IMR-90 (cell line): ENCODE measurements at regions of chr19 and their contacts with region 1.

Region 1: GRCh38 chr19:2503521-2504109 is 27.7 kb downstream of the GADD45B start:
- DNase-seq: peak; percentile 78
- ATAC-seq: peak; percentile 71
- H3K4me3 ChIP-seq: no peak overlapping the region
- H3K27ac ChIP-seq: peak overlapping the region; percentile 17; the same call in 1 of the 2 replicates
- H3K4me1 ChIP-seq: peaks cover 15% of the 10 kb centered on the region
- H3K27me3 ChIP-seq: no peaks in the 10 kb centered on the region
- CTCF ChIP-seq: no peak
- POLR2A ChIP-seq: peak; percentile 49; the same call in 1 of the 2 replicates
- RAD21 ChIP-seq: no peak

Region 2: GRCh38 chr19:2491130-2491801 is 12.3 kb before region 1 on chr19:
- CTCF ChIA-PET with region 1: no interaction called
- POLR2A ChIA-PET with region 1: no interaction called
- dilution Hi-C with region 1: no loop called
- in situ Hi-C with region 1: no loop called
- intact Hi-C with region 1: loop called (anchors 1 kb)
- DNase-seq: peak; percentile 84
- ATAC-seq: peak; percentile 53
- H3K4me3 ChIP-seq: no peak overlapping the region
- H3K27ac ChIP-seq: peak overlapping the region; percentile 2; the same call in 1 of the 2 replicates
- H3K4me1 ChIP-seq: peaks cover 22% of the 10 kb centered on the region
- H3K27me3 ChIP-seq: no peaks in the 10 kb centered on the region; the same call in 1 of the 2 replicates
- CTCF ChIP-seq: no peak
- POLR2A ChIP-seq: no peak
- RAD21 ChIP-seq: no peak